Esophagus muscularis mucosa (tissue), 4 donors: ENCODE measurements at regions of chr18 and their contacts with region 1.

Region 1: DNA sequence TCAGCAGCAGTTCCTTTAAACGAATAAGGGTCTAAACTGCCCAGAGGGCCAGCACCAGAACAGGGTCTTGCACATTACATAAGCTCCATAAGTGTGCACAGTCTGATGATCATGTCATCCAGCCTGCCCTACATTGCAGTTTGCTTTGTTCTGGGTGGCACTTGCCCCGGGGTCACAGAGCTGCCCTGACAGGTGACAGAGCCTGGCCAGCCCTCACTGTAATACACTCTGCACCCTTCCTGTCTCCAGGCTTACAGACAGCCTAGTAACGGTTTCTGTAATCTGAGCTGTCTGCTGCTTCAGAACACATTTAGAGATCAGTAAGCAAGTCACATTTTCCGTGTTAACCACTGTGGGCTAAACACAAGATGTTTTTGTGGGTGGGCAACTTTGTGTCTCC is 213.3 kb downstream of the FAM210A start:
- DNase-seq: no peak
- H3K4me3 ChIP-seq: no peak overlapping the region
- H3K27ac ChIP-seq: no peak overlapping the region
- H3K4me1 ChIP-seq: peaks cover 0 to 5% (median 0%) of the 10 kb centered on the region in 4 donors
- H3K27me3 ChIP-seq: no peaks in the 10 kb centered on the region
- CTCF ChIP-seq: no peak
- EP300 ChIP-seq: no peak
- POLR2A ChIP-seq: no peak

Region 2: DNA sequence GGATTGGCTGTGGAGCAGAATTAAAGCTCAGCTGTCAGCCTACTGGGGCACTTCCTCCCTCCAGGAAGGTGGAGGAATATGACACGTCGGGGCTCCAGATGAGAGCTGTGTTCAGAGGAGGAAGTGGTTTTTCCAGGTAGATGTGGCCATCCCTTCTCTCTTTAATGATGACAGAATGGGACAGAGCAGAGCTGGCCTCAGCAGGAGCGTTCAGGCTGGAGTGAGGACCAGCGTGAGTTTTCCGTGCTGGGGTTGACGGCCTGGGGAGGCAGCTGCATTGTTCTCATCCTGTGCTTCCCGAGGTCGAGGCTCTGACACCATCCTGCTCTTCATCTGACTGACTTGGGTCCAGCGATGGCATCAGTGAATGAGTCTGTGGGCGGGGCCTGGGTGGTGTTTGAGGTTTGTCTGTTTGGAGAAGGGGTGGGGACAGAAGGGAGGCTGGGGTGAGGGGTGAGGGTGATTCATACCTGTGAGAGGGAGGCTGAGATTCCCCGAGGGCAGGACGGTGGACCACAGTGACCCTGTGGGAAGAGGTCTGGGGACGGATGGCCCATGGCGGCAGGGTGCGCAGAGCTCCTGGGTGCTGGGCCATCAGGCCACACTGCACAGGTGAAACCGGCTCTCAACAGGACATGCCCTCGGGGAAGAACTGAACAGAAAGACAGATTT is 87.4 kb before region 1 on chr18:
- intact Hi-C with region 1: no loop called
- DNase-seq: no peak
- H3K4me3 ChIP-seq: no peak overlapping the region
- H3K27ac ChIP-seq: no peak overlapping the region
- H3K4me1 ChIP-seq: peaks cover 25 to 38% (median 28%) of the 10 kb centered on the region in 4 donors
- H3K27me3 ChIP-seq: no peaks in the 10 kb centered on the region
- CTCF ChIP-seq: no peak
- EP300 ChIP-seq: no peak
- POLR2A ChIP-seq: no peak

Region 3: DNA sequence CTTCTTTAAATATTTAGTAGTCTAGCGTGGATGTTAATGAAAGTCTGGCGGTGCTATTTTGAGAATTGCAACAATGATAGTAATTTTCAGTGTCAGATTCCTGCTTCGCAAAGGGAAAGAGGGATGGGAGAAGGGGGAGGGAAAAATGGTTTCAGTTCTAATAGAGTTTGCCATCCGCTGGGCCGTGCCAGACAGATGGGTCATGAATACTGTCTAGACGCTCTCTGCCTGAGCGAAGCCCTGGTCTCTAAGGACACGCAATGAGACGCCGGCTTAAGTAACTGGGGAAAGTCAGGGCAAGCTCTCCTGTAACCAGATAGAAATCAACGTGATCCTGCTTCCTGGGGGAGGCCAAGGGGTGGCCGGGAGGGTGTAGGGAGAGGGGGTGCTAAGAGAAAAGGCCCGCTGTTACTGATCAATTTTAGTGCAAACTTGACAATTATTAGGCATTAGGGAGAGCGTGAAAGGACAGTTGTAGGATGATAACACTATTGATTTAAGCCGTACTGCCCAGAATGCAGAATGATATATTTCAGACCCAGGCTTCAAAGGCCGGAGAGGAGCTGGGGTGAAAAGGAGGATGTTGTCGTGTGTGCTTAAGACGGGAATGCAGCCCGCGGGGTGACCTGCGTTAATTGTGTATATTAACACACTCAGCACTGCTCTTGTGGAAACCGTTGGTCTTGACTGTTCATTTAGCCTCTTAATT is 65.2 kb before region 1 on chr18:
- intact Hi-C with region 1: loop called (anchors 10 kb)
- DNase-seq: no peak
- H3K4me3 ChIP-seq: peak overlapping the region; percentile 18 to 36 (median 24)
- H3K27ac ChIP-seq: peak overlapping the region in 2 of 4 donors; percentile 7 to 9
- H3K4me1 ChIP-seq: peaks cover 44 to 49% (median 44%) of the 10 kb centered on the region in 4 donors
- H3K27me3 ChIP-seq: no peaks in the 10 kb centered on the region
- CTCF ChIP-seq: no peak
- EP300 ChIP-seq: no peak
- POLR2A ChIP-seq: no peak

Region 4: DNA sequence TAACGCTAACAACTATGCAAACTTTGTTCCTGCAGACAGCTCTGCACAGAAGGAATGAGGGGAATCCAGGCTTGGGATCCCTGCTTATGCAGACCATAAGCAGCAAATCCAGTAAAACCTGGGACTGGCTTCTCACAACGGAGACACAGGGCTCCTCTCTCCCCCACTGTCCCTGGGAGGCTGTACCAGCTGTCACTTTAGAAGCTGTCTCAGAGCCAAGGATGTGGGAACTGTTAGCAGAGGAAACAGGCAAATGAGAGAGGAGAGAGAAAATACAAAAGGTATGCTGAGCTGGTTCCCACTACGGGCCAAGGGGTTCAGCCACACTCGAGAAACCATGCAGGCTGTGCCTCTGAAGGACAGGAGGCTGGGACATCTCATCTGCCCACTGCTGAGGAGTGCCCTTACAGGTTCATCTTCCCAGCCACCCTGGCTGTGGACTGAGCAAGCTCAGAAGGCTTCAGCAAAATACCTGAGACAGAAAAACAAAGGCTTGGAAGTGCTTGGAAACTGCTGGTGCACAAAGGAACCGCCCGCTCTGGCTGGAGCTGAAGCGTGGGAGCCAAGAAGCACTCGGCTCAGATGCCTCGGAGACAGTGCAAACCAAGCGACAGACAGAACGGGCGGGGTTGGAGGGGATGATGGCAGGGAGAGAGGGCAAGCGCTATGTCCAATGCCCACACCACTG is 140.9 kb after region 1 on chr18:
- intact Hi-C with region 1: no loop called
- DNase-seq: no peak
- H3K4me3 ChIP-seq: no peak overlapping the region
- H3K27ac ChIP-seq: no peak overlapping the region
- H3K4me1 ChIP-seq: peaks cover 9 to 21% (median 18%) of the 10 kb centered on the region in 4 donors
- H3K27me3 ChIP-seq: no peaks in the 10 kb centered on the region
- CTCF ChIP-seq: no peak
- EP300 ChIP-seq: no peak
- POLR2A ChIP-seq: no peak